ENCODE measurements at regions of chr14 and their contacts with region 1.

Region 1: DNA sequence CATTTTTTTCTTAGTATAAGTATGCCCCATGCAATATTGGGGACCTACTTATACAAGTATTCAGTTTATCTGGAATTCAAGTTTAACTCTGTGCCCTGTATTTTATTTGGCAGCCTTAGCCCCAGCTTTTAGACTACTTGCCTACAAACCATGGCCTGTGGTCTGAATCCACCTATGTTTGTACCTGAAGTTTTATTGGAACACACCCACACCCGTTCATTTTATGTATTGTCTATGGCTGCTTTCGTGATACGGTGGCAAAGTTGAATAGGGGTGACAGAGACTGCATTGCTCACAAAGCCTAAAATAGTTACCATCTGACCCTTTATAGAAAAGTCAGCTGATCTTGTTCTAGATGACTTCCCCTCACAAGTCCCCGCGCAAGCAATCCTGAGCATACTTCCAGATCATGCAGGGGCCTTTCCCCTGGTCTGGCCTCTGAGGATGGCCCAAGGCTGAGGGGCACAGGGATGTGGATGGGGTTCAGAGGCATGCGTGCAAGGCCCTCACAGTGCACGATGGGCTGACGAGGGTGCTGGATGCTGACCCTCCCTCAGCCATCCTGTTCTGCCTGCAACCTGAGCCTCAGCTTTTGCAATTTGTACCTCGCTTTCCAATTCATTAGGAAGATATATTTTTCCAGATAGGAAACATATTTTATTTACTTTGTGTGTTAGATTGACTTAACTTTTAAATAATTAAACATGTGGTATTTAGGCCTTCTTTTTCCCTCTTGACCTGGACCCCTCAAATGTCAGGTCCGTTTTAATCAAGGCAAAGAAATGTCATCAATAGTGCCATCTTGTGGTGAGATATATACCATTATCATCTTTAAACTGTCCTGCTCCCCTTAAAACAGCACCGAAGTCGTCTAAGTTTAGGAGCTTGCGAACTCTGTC is 527.3 kb upstream of the CCDC196 start:
- DNase-seq: no peak
- H3K4me3 ChIP-seq: no peak overlapping the region
- H3K27ac ChIP-seq: no peak overlapping the region
- H3K4me1 ChIP-seq: no peaks in the 10 kb centered on the region
- H3K27me3 ChIP-seq: no peaks in the 10 kb centered on the region
- CTCF ChIP-seq: peak; percentile 74

Region 2: DNA sequence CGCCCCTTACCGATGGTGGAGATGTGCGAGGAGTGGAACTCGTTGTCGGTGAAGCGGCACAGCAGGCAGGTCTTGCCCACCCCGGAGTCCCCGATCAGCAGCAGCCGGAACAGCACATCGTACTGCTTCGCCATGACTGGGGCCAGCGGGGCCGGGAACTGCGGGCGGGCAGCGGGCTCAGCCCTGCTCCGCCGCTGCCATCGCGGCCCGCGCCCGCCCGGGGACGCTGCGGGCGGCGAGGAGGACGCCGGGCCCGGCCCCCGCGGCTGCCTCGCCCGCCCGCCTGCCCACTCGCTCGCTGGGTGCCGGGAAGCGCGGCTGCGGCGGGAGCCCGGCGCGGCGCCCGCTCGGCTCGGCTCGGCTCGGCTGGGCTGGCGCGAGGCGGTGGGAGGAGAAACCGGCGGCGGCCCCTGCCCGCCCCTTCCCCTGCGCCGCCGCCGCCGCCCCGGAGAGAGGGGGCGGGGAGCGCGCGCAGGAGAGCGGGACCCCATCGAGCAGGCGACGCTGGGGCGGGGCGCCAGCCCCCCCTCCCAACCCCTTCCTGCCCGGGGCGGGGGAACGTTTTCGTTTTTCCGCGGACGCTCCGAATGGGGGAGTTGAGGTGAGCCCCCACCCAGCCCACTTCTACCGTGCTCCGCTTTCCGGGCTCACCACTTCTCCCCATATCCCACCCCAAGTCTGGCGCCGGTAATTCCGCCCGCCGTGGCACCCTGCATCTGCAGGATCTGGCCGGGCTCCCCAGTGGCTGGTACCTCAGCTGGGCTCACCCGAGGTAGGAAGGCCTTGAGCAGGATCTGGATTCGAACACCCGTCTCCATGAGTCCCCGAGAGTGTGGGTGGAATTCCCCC is 986.7 kb before region 1 on chr14 and contains the start of gene RAB15:
- CTCF ChIA-PET with region 1: interaction called, 12 read pairs
- POLR2A ChIA-PET with region 1: no interaction called
- intact Hi-C with region 1: no loop called
- DNase-seq: peak in 1 of 2 experiments; percentile 42
- H3K4me3 ChIP-seq: peak within 1 kb of the TSS; percentile 83
- H3K27ac ChIP-seq: peak within 1 kb of the TSS; percentile 79
- H3K4me1 ChIP-seq: peaks cover 45% of the 10 kb centered on the region
- H3K27me3 ChIP-seq: no peaks in the 10 kb centered on the region
- CTCF ChIP-seq: no peak
- total RNA-seq, gene RAB15: 52.9 and 74.9 TPM in 2 replicates

Region 3: DNA sequence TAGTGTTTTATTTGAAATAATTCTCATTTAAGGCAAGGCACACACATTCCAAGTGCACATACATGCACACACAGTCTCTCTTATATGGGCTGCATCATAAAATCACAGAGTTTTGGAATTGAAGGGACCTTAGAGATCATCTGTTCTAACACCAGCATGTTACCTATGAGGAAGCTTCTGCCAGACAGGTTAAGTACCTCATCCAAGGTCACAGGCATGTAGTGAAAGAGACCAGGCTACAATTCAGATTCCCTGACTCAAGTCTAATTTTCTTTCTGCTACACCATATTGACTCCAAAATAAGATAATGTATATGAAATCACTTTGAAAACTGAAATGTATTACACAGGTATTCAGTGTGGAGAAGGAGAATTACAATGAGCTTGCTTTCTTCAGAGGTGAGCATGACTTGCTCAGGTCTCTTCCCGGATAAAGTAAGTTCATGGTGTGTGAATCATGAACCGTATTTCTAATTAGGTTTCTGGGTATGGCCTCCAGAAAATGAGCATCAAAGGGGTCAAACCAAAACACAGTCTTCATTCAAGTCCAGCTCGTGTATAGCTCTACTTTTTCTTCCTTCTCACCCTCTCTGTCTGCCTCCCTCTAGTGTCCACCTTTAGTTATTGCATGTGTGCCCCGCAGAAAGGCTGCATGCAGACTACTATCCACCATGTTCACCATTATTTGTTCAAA is 134.5 kb before region 1 on chr14:
- CTCF ChIA-PET with region 1: no interaction called
- POLR2A ChIA-PET with region 1: no interaction called
- intact Hi-C with region 1: loop called (anchors 2 kb)
- DNase-seq: peak; percentile 46 to 48
- H3K4me3 ChIP-seq: no peak overlapping the region
- H3K27ac ChIP-seq: no peak overlapping the region
- H3K4me1 ChIP-seq: no peaks in the 10 kb centered on the region
- H3K27me3 ChIP-seq: no peaks in the 10 kb centered on the region
- CTCF ChIP-seq: peak; percentile 92

Region 4: GRCh38 chr14:66070509-66071319 is 111.8 kb after region 1 on chr14:
- CTCF ChIA-PET with region 1: no interaction called
- POLR2A ChIA-PET with region 1: no interaction called
- intact Hi-C with region 1: loop called (anchors 5 kb)
- DNase-seq: peak in 1 of 2 experiments; percentile 63
- H3K4me3 ChIP-seq: no peak overlapping the region
- H3K27ac ChIP-seq: no peak overlapping the region
- H3K4me1 ChIP-seq: no peaks in the 10 kb centered on the region; the same call in 1 of the 2 replicates
- H3K27me3 ChIP-seq: no peaks in the 10 kb centered on the region
- CTCF ChIP-seq: peak; percentile 98